ENCODE measurements at regions of chr12 and their contacts with region 1.

Region 1: GRCh38 chr12:105107494-105108371 is at the start of gene WASHC4:
- DNase-seq: peak; percentile 96
- ATAC-seq: peak; percentile 88
- H3K4me3 ChIP-seq: peak within 1 kb of the TSS; percentile 89 to 99 (median 97)
- H3K4me3 Mint-ChIP-seq: peak within 1 kb of the TSS; percentile 98
- H3K27ac ChIP-seq: peak within 1 kb of the TSS; percentile 93 to 98
- H3K27ac Mint-ChIP-seq: peak within 1 kb of the TSS; percentile 99
- H3K4me1 ChIP-seq: peaks cover 7 to 35% of the 10 kb centered on the region in 2 donors
- H3K4me1 Mint-ChIP-seq: peaks cover 31% of the 10 kb centered on the region
- H3K27me3 ChIP-seq: peaks cover 0 to 9% (median 0%) of the 10 kb centered on the region in 4 experiments
- H3K27me3 Mint-ChIP-seq: peaks cover 8% of the 10 kb centered on the region
- CTCF ChIP-seq: no peak
- total RNA-seq, gene WASHC4: 240 and 247 TPM in 2 replicates

Region 2: DNA sequence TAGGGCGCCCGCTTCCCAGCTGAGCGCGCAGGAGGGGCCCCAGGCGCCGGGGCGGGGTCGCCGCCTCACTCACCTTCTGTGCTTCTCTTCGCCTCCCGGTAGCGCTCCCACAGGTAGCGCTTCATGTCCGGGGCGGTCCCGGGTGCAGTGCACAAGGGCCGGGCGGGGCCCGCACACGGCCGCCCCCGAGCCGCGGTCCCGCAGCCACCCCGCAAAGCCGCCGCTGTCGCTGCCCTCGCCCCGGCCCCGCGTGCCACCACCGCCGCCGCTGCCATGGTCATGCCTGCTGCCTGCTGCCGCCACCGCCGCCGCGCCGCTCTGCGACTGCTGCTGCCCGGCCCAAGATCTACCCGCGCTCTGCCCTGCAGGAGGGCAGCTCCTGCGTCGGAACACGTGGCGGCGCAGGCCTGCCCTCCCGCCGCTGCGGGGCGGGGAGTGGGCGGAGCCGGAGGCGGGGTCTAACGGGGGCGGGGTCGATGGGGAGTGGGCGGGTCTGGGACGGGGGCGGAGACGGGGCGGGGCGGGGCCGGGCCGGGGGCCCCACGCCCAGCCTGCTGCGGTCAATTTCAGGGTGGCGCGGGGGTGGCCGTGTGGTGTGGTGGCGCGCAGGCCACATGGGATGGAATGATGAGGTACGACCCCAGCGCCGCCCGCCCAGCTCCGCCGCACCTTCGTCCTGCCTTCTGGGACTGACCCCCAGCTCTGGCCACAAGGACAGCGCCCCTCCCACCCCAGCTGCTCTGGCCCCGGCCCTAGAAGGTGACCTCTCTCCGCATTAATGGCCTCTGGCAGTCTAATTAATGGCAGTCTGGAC is 1266.7 kb before region 1 on chr12 and contains the start of gene NT5DC3:
- CTCF ChIA-PET with region 1: no interaction called
- POLR2A ChIA-PET with region 1: no interaction called
- intact Hi-C with region 1: loop called (anchors 5 kb)
- DNase-seq: peak; percentile 92
- ATAC-seq: peak; percentile 91
- H3K4me3 ChIP-seq: peak within 1 kb of the TSS in 4 of 5 experiments; percentile 50 to 86 (median 76)
- H3K4me3 Mint-ChIP-seq: peak within 1 kb of the TSS; percentile 89
- H3K27ac ChIP-seq: no peak within 1 kb of the TSS
- H3K27ac Mint-ChIP-seq: peak within 1 kb of the TSS; percentile 88
- H3K4me1 ChIP-seq: peaks cover 14 to 22% of the 10 kb centered on the region in 2 donors
- H3K4me1 Mint-ChIP-seq: peaks cover 27% of the 10 kb centered on the region
- H3K27me3 ChIP-seq: no peaks in the 10 kb centered on the region
- H3K27me3 Mint-ChIP-seq: no peaks in the 10 kb centered on the region
- CTCF ChIP-seq: no peak
- total RNA-seq, gene NT5DC3: 10.6 and 14.7 TPM in 2 replicates

Region 3: DNA sequence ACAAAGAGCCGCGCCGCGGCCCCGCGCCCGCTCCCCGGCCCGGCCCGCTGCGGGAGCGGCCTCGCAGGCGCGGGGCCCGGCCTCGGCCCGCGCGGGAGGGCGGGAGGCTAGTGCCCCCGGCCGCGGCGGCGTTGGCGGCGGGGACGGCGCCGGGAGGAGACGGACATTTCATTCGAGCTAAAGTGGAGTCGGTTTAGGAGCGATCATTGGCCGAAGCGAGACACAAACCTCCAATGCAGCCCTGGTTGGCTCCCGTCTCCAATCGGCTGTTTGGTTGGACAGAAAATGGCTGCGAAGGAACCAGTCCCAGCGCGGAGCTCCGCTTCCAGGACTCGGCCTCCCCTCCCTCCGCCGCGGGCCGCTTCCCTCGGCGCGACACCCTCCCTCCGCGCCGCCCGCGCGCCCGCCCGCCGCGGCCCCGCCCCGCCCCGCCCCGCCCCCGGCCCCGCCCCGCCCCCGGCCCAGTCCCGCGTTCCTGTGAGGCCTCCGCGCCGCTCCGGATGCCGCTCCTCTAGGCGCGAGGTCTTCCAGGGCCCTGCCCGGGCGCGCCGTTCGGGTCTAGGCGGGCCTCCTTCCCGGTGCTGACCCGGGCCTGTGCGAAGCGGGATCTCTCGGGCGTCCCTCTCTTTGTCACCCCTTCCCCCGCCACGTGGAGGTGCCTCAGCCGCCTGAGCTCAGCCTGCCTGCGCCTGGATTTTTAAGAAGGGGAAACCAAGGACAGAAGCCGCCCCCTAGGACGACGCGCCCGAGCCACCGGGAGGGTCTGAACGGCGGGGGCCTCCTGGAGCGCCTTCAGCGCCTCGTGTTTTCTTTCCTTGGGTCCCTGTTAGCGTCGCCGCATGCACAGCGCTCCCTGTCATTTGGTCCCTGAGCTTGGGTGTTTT is 969.6 kb before region 1 on chr12 and contains the start of gene NFYB:
- CTCF ChIA-PET with region 1: no interaction called
- POLR2A ChIA-PET with region 1: no interaction called
- intact Hi-C with region 1: loop called (anchors 2 kb)
- DNase-seq: peak; percentile 96
- ATAC-seq: peak; percentile 94
- H3K4me3 ChIP-seq: peak within 1 kb of the TSS; percentile 52 to 73 (median 67)
- H3K4me3 Mint-ChIP-seq: peak within 1 kb of the TSS; percentile 93
- H3K27ac ChIP-seq: peak within 1 kb of the TSS; percentile 43 to 70
- H3K27ac Mint-ChIP-seq: peak within 1 kb of the TSS; percentile 92
- H3K4me1 ChIP-seq: peaks cover 24 to 25% of the 10 kb centered on the region in 2 donors
- H3K4me1 Mint-ChIP-seq: peaks cover 16% of the 10 kb centered on the region
- H3K27me3 ChIP-seq: no peaks in the 10 kb centered on the region
- H3K27me3 Mint-ChIP-seq: no peaks in the 10 kb centered on the region
- CTCF ChIP-seq: no peak
- total RNA-seq, gene NFYB: 20.2 and 27.2 TPM in 2 replicates

Region 4: GRCh38 chr12:104303538-104304151 is 804.1 kb before region 1 on chr12 and contains the start of gene EID3:
- CTCF ChIA-PET with region 1: no interaction called
- POLR2A ChIA-PET with region 1: interaction called, 3 read pairs
- intact Hi-C with region 1: loop called (anchors 1 kb)
- DNase-seq: peak; percentile 89
- ATAC-seq: peak; percentile 97
- H3K4me3 ChIP-seq: peak within 1 kb of the TSS; percentile 19 to 74 (median 62)
- H3K4me3 Mint-ChIP-seq: peak within 1 kb of the TSS; percentile 89
- H3K27ac ChIP-seq: peak within 1 kb of the TSS; percentile 54 to 74
- H3K27ac Mint-ChIP-seq: peak within 1 kb of the TSS; percentile 86
- H3K4me1 ChIP-seq: peaks cover 15 to 19% of the 10 kb centered on the region in 2 donors
- H3K4me1 Mint-ChIP-seq: peaks cover 52% of the 10 kb centered on the region
- H3K27me3 ChIP-seq: no peaks in the 10 kb centered on the region
- H3K27me3 Mint-ChIP-seq: no peaks in the 10 kb centered on the region
- CTCF ChIP-seq: no peak
- total RNA-seq, gene EID3: 9.2 and 9.4 TPM in 2 replicates

Region 5: GRCh38 chr12:104930388-104931326 is 177.1 kb before region 1 on chr12:
- CTCF ChIA-PET with region 1: no interaction called
- POLR2A ChIA-PET with region 1: no interaction called
- intact Hi-C with region 1: no loop called
- DNase-seq: no peak
- ATAC-seq: no peak
- H3K4me3 ChIP-seq: no peak overlapping the region
- H3K4me3 Mint-ChIP-seq: peak overlapping the region; percentile 20
- H3K27ac ChIP-seq: no peak overlapping the region
- H3K27ac Mint-ChIP-seq: peak overlapping the region; percentile 38
- H3K4me1 ChIP-seq: no peaks in the 10 kb centered on the region
- H3K4me1 Mint-ChIP-seq: peaks cover 18% of the 10 kb centered on the region
- H3K27me3 ChIP-seq: no peaks in the 10 kb centered on the region
- H3K27me3 Mint-ChIP-seq: no peaks in the 10 kb centered on the region
- CTCF ChIP-seq: no peak

Region 6: DNA sequence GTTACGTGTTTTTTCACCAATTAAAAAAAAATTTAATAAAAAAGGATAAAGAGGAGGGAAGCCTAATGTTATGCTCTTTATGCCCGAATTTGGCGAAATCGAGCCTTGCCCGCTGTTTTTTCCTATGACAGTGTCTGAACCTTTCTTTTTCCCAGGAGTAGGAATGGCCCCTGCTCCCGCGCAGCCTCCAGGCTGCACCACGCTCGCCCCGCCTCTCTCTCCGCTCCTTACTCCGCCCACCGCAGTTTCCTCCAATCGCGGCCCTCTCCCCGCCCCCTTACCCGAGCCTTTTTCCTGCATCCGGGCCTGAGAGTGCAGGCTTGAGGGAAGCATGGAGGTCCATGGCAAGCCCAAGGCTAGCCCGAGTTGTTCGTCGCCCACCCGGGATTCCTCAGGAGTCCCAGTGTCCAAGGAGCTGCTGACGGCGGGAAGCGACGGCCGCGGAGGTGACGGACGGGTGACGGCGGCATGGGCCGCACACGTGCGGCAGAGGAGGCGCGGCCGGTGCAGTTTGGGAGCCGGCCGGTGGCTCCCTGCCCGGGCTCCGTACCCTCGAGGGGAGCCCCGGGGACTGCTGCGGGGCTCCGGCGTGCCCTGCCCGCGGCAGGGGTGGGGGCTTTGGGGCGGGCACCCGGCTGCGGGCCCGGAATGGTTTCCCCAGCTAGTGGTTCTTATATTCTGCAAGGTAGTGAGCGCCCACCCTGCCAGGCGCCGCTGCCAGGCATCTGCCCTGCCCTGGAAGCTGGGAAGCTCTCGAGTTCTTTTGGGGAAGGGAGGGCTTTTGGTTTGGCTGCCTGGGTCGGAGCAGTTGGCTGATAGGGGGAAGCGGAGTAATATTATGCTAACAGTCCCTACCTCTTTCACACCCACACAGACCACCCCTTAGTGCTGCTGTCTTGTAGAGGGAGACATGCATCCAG is 121.5 kb before region 1 on chr12 and contains the start of gene NOPCHAP1:
- CTCF ChIA-PET with region 1: no interaction called
- POLR2A ChIA-PET with region 1: no interaction called
- intact Hi-C with region 1: loop called (anchors 1 kb)
- DNase-seq: peak; percentile 86
- ATAC-seq: peak; percentile 99
- H3K4me3 ChIP-seq: peak within 1 kb of the TSS; percentile 57 to 93 (median 78)
- H3K4me3 Mint-ChIP-seq: peak within 1 kb of the TSS; percentile 87
- H3K27ac ChIP-seq: peak within 1 kb of the TSS; percentile 14 to 60
- H3K27ac Mint-ChIP-seq: peak within 1 kb of the TSS; percentile 68
- H3K4me1 ChIP-seq: peaks cover 17 to 18% of the 10 kb centered on the region in 2 donors
- H3K4me1 Mint-ChIP-seq: peaks cover 27% of the 10 kb centered on the region
- H3K27me3 ChIP-seq: no peaks in the 10 kb centered on the region
- H3K27me3 Mint-ChIP-seq: no peaks in the 10 kb centered on the region
- CTCF ChIP-seq: no peak
- total RNA-seq, gene NOPCHAP1: 15.3 and 21.2 TPM in 2 replicates

Region 7: GRCh38 chr12:105141320-105141918 is 33.7 kb after region 1 on chr12:
- CTCF ChIA-PET with region 1: no interaction called
- POLR2A ChIA-PET with region 1: no interaction called
- intact Hi-C with region 1: loop called (anchors 5 kb)
- DNase-seq: no peak
- ATAC-seq: no peak
- H3K4me3 ChIP-seq: no peak overlapping the region
- H3K4me3 Mint-ChIP-seq: no peak overlapping the region
- H3K27ac ChIP-seq: no peak overlapping the region
- H3K27ac Mint-ChIP-seq: peak overlapping the region; percentile 10
- H3K4me1 ChIP-seq: no peaks in the 10 kb centered on the region
- H3K4me1 Mint-ChIP-seq: peaks cover 13% of the 10 kb centered on the region
- H3K27me3 ChIP-seq: no peaks in the 10 kb centered on the region
- H3K27me3 Mint-ChIP-seq: no peaks in the 10 kb centered on the region
- CTCF ChIP-seq: no peak

Region 8: GRCh38 chr12:105330283-105330930 is 222.7 kb after region 1 on chr12 and contains the start of gene C12orf75:
- CTCF ChIA-PET with region 1: no interaction called
- POLR2A ChIA-PET with region 1: no interaction called
- intact Hi-C with region 1: loop called (anchors 5 kb)
- DNase-seq: peak; percentile 89
- ATAC-seq: peak; percentile 93
- H3K4me3 ChIP-seq: peak within 1 kb of the TSS; percentile 25 to 78 (median 69)
- H3K4me3 Mint-ChIP-seq: peak within 1 kb of the TSS; percentile 92
- H3K27ac ChIP-seq: peak within 1 kb of the TSS; percentile 52 to 69
- H3K27ac Mint-ChIP-seq: peak within 1 kb of the TSS; percentile 86
- H3K4me1 ChIP-seq: peaks cover 27 to 38% of the 10 kb centered on the region in 2 donors
- H3K4me1 Mint-ChIP-seq: peaks cover 44% of the 10 kb centered on the region
- H3K27me3 ChIP-seq: no peaks in the 10 kb centered on the region
- H3K27me3 Mint-ChIP-seq: no peaks in the 10 kb centered on the region
- CTCF ChIP-seq: no peak
- total RNA-seq, gene C12orf75: 7.9 and 12.9 TPM in 2 replicates

Measured in B cell (primary cell).